Activated CD8-positive, alpha-beta T cell treated with anti-CD3 and anti-CD28 coated beads for 36 hours (primary cell): ENCODE measurements at regions of chr4 and their contacts with region 1.

Region 1: DNA sequence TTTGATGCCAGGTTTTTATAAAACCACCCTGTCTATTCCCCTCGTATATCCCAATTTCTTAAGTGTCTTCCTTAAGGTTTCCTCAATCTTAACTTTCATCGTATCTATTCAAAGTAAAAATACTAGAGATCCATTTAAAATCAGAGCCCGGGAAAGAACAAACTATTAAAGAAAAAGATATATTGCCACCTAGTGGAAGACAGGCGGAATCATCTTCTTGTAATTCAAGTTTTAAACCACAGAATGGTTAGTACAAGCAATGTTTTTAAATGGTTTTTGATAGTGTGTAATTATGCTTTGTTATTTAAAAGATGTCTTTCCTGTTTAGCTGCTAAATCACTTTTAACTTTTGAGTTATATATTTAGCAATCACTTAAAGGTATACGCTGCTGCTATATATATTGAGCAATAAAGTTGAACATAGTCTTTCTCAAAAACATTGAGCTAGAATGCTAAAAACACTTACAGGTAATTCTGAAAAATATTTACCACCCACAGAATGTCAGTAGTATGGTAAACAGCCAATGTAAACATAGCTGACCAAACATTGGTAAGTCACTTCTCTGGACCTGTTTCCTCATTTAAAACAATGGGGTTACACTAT is 18.2 kb downstream of the PRDM8 start:
- DNase-seq: no peak
- ATAC-seq: no peak
- H3K4me3 Mint-ChIP-seq: no peak overlapping the region
- H3K27ac Mint-ChIP-seq: no peak overlapping the region
- H3K4me1 Mint-ChIP-seq: no peaks in the 10 kb centered on the region
- H3K27me3 Mint-ChIP-seq: peaks cover 22% of the 10 kb centered on the region
- CTCF ChIP-seq: peak; percentile 85

Region 2: DNA sequence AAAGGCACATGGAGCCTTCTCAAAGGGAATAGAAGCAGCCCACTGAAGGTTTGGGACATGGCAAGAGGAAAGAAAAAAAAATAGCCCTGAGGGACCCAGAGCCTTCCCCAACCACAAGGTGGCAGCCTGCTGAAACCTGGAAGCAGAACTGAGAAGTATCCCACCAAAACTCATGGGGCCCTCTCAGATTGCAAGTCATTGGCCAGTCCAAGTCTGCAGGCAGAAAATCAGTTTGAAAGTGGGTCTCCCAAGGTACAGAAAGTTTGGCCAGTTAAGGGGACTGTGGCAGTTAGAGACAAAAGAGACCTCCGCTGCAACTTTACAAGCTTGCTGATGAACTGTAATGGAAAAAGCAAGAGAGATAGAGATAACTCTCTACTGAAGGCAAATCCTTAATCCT is 298.3 kb before region 1 on chr4:
- CTCF ChIA-PET with region 1: interaction called, 7 read pairs
- POLR2A ChIA-PET with region 1: no interaction called
- intact Hi-C with region 1: loop called (anchors 1 kb)
- DNase-seq: peak; percentile 78
- ATAC-seq: no peak
- H3K4me3 Mint-ChIP-seq: no peak overlapping the region
- H3K27ac Mint-ChIP-seq: no peak overlapping the region
- H3K4me1 Mint-ChIP-seq: peaks cover 9% of the 10 kb centered on the region
- H3K27me3 Mint-ChIP-seq: no peaks in the 10 kb centered on the region
- CTCF ChIP-seq: peak; percentile 68